ENCODE measurements at regions of chr17 and their contacts with region 1.

Region 1: GRCh38 chr17:31842183-31843069 is 16.6 kb downstream of the COPRS start:
- DNase-seq: peak; percentile 80
- ATAC-seq: peak; percentile 93
- H3K4me3 Mint-ChIP-seq: no peak overlapping the region
- H3K27ac Mint-ChIP-seq: no peak overlapping the region
- H3K4me1 Mint-ChIP-seq: no peaks in the 10 kb centered on the region
- H3K27me3 Mint-ChIP-seq: peaks cover 6% of the 10 kb centered on the region

Region 2: DNA sequence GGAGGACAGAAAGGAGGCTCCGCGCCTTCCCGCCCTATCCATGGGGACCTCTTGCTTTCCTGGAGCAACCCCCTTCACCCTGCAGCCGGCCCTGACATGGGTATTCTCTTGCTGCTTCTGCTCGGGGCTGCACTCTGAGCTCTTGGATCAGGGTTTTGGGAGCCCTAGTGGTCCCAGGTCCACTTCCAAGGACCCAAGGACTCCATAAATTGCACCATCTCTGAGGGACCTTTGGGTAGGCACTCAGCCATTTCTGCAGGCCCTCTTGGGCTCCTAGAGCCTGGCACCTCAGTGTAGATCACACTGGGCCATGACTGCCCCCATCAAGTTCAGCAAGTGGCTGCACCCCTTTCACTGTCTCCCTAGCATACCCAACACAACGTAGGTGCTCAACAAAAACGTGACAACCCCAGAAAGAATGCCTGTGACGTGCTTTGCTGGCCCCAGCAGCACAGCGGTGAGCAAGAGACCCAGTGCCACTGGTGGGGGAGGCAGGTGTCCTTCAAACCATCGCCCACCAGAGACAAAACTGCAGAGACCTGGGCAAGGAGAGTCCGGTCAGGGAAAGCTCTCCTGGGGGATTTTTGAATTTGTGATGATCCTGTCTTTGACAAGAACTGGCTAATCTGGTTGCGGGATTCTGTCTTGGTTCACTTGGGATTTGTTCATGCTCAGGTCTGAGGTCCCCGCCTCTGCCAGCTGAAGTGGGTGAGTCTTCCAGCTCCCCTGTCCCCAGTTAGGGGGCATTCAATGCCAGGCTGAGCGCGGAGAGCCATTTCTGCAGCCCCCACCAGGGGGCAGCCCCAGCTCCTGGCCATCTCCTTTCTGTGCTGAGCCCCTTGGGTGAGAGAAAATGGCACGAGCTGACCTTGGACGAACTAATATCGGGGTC is 453.4 kb before region 1 on chr17:
- CTCF ChIA-PET with region 1: no interaction called
- POLR2A ChIA-PET with region 1: no interaction called
- intact Hi-C with region 1: loop called in 1 of 2 experiments (anchors 2 kb)
- DNase-seq: peak; percentile 63
- ATAC-seq: peak; percentile 53
- H3K4me3 Mint-ChIP-seq: no peak overlapping the region
- H3K27ac Mint-ChIP-seq: no peak overlapping the region
- H3K4me1 Mint-ChIP-seq: peaks cover 3% of the 10 kb centered on the region
- H3K27me3 Mint-ChIP-seq: peaks cover 26% of the 10 kb centered on the region

Region 3: DNA sequence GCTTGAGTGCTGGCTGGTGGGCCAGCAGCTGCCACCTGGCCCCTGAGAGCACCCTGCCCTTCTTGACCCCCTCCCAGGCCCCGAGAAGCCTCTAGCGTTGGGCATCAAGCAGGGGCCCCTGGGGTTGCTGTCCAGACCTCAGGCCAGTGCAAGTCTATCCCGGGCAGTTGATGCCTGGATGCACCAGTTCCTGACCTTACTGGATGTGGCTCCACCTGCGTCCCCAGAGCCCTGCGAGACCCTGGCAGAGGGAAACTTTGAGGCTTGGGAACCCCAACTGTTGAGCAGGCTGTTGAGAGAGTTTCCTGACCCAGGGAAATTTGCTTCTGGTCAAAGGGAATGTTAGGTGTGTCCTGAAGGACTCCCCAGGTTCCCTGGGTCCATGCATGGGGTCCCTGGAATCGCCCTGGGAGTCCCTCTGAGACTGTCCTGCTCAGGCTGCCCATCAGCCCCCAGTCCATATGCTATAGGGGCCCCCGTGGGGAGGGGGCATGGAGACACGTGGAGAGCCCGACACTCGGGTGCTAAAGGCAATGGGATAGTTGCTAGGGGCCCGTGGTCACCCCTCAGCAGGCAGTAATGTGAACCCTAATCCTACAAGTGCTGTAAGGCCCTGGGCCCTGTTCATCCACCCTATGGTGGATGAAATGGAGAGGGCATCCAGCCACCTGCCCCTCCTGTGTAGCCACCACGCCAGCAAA is 404.6 kb before region 1 on chr17:
- CTCF ChIA-PET with region 1: interaction called, 6 read pairs
- POLR2A ChIA-PET with region 1: no interaction called
- intact Hi-C with region 1: loop called (anchors 1 kb)
- DNase-seq: no peak
- ATAC-seq: no peak
- H3K4me3 Mint-ChIP-seq: no peak overlapping the region
- H3K27ac Mint-ChIP-seq: no peak overlapping the region
- H3K4me1 Mint-ChIP-seq: peaks cover 11% of the 10 kb centered on the region
- H3K27me3 Mint-ChIP-seq: no peaks in the 10 kb centered on the region

Region 4: DNA sequence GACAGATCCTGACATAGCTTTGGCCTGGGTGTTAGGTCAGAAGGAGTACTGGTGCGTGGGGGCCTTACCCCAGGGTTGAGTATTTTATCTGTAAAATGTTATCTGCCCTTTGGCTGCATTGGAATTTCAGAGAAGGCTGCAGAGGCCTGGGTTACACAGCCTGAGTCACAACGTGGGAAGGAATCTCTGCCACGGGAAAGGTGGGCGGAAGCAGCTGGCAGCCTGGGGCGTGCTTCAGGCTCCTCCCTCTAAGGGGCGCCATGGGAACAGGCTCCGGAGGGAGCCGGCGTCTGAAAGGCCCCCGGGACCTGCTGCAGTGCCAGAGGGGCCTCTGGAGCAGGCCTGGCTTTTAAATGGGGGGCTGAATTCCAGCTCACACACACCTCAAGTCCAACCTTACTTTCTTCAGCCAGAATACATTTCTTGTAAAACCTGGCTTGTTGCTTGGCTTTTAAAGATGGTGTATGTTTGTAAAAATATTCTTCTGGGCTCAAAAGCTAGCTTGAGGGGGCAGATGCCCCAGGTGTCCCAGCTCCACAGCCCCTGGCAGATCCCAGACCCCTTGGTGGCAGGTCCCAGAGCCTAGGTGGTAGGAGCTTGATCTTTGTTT is 308.8 kb before region 1 on chr17:
- CTCF ChIA-PET with region 1: interaction called, 5 read pairs
- POLR2A ChIA-PET with region 1: no interaction called
- intact Hi-C with region 1: loop called (anchors 1 to 5 kb)
- DNase-seq: peak; percentile 66
- ATAC-seq: peak; percentile 43
- H3K4me3 Mint-ChIP-seq: no peak overlapping the region
- H3K27ac Mint-ChIP-seq: no peak overlapping the region
- H3K4me1 Mint-ChIP-seq: peaks cover 18% of the 10 kb centered on the region
- H3K27me3 Mint-ChIP-seq: no peaks in the 10 kb centered on the region

Region 5: DNA sequence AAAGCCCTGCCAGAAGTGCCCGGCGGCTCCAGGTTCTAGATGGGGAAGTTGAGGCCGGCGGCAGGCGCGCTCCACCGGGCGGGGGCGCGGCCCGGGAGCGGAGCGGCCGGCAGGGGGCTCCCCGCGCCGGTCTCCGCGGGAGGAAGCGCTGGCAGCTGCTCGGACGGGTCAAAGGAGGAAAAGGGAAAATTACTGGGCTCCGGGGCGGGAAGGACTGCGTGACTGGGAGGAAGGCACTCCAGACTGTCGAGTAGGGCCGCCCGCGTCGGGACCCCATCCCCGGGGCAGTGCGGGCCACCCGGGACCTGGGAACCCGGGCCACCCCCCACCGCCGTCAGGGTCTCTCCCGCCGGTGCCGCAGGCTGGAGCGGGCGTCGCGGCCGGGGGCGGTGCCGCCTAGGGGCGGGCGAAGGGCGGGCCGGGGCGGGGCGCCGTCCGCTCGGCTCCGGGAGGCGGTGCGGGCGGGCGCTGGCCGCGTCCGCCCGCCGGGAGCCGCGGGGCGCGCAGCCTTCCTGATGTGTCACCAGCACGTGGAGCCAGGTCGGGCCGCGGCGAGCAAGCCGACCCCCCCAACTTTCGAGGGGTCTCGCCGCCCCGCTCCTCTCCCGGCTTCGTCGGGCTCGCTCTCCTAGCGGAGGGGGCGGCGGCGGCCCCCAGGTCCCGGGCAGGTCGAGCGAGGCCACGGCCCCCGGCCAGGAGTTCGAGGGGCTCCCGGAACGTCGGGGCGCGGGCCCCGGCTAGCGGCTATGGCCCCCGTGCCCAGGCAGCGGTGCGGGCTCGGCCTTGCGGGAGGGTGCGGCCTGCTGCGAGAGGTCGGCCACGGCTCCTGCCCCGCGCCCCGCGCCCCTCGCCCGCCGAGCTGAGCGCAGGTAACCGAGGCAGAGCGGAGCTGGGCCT is 283.4 kb before region 1 on chr17:
- CTCF ChIA-PET with region 1: interaction called, 3 read pairs
- POLR2A ChIA-PET with region 1: no interaction called
- intact Hi-C with region 1: loop called (anchors 1 to 2 kb)
- DNase-seq: peak; percentile 75
- ATAC-seq: peak; percentile 83
- H3K4me3 Mint-ChIP-seq: peak overlapping the region; percentile 59
- H3K27ac Mint-ChIP-seq: no peak overlapping the region
- H3K4me1 Mint-ChIP-seq: peaks cover 18% of the 10 kb centered on the region
- H3K27me3 Mint-ChIP-seq: peaks cover 5% of the 10 kb centered on the region

Region 6: DNA sequence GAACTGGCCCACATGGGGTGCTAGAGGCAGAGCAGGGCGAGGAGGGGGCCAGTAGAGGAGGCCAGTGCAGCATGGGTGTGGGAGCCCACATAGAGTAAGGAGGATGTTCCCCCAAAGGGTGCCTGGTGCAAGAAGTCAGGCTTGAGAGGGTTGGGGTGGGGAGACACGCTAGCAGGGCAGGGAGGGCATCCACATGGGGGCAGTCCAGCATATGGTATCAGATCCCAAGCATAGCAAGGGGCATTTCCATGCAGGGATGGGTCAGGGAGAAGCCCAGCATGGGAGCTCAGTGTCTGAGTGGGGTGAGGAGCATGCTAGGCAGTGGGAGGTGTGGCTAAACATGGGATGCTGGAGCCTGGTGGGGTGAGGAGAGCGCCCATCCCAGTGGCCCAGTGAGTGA is 197.1 kb before region 1 on chr17:
- CTCF ChIA-PET with region 1: interaction called, 5 read pairs
- POLR2A ChIA-PET with region 1: no interaction called
- intact Hi-C with region 1: loop called in 1 of 2 experiments (anchors 1 kb)
- DNase-seq: peak; percentile 9
- ATAC-seq: no peak
- H3K4me3 Mint-ChIP-seq: no peak overlapping the region
- H3K27ac Mint-ChIP-seq: no peak overlapping the region
- H3K4me1 Mint-ChIP-seq: no peaks in the 10 kb centered on the region
- H3K27me3 Mint-ChIP-seq: peaks cover 19% of the 10 kb centered on the region

Region 7: GRCh38 chr17:31830971-31831858 is 11.2 kb before region 1 on chr17:
- CTCF ChIA-PET with region 1: interaction called, 13 read pairs
- POLR2A ChIA-PET with region 1: no interaction called
- intact Hi-C with region 1: no loop called
- DNase-seq: no peak
- ATAC-seq: no peak
- H3K4me3 Mint-ChIP-seq: no peak overlapping the region
- H3K27ac Mint-ChIP-seq: no peak overlapping the region
- H3K4me1 Mint-ChIP-seq: peaks cover 4% of the 10 kb centered on the region
- H3K27me3 Mint-ChIP-seq: no peaks in the 10 kb centered on the region

Measured in activated CD4-positive, alpha-beta T cell treated with anti-CD3 and anti-CD28 coated beads for 36 hours (primary cell).